Breast epithelium (tissue), 4 donors: ENCODE measurements at regions of chr20 and their contacts with region 1.

Region 1: GRCh38 chr20:10540636-10541493 is 105.8 kb downstream of the SLX4IP start:
- DNase-seq: no peak
- H3K4me3 ChIP-seq: peak overlapping the region in 1 of 3 donors; percentile 27
- H3K27ac ChIP-seq: peak overlapping the region; percentile 83 to 88
- H3K4me1 ChIP-seq: peaks cover 0 to 5% of the 10 kb centered on the region in 2 donors
- H3K27me3 ChIP-seq: no peaks in the 10 kb centered on the region
- CTCF ChIP-seq: no peak
- POLR2A ChIP-seq: no peak

Region 2: DNA sequence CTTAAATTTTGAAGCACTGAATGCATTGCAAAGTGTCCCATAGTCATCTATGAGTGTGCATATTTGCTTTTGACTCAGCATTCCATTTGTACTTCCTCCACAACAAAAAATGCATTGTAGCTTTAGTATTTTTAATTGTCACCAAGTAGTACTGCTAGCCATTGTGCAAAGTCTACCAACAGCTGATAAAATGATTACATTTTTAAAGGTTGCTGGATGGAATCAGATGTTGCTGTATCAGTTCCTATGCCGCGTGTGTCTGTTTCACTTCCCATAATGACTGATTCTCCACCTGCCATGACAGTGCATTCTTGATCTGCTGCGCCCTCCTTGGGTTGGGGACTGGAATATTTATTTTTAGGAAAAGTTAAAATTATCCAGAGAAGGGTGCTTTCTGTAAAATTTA is 64.5 kb before region 1 on chr20:
- intact Hi-C with region 1: loop called (anchors 10 kb)
- DNase-seq: no peak
- H3K4me3 ChIP-seq: no peak overlapping the region
- H3K27ac ChIP-seq: no peak overlapping the region
- H3K4me1 ChIP-seq: no peaks in the 10 kb centered on the region
- H3K27me3 ChIP-seq: no peaks in the 10 kb centered on the region
- CTCF ChIP-seq: no peak
- POLR2A ChIP-seq: no peak

Region 3: GRCh38 chr20:10521068-10521831 is 19.6 kb before region 1 on chr20:
- intact Hi-C with region 1: no loop called
- DNase-seq: no peak
- H3K4me3 ChIP-seq: no peak overlapping the region
- H3K27ac ChIP-seq: no peak overlapping the region
- H3K4me1 ChIP-seq: no peaks in the 10 kb centered on the region
- H3K27me3 ChIP-seq: no peaks in the 10 kb centered on the region
- CTCF ChIP-seq: no peak
- POLR2A ChIP-seq: no peak

Region 4: DNA sequence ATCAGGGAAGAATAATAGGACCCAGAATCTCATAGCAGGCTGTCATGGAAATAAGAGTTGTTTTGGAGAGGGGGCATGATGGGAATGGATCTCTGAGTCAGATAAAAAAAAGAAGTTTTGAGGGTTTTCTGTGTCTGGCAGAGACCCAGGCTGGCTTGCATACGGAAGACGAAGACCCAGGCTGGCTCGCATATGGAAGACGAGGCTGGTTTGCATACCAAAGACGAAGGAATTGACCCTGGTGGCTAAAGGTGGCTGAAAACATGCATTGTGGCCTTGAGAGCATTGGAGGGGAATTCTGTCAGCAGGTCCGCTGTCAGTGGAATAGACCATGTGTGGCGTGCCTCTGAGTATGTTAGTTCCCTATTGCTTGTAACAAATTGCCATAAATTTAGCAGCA is 1711.9 kb after region 1 on chr20:
- intact Hi-C with region 1: loop called (anchors 5 kb)
- DNase-seq: no peak
- H3K4me3 ChIP-seq: no peak overlapping the region
- H3K27ac ChIP-seq: no peak overlapping the region
- H3K4me1 ChIP-seq: no peaks in the 10 kb centered on the region
- H3K27me3 ChIP-seq: no peaks in the 10 kb centered on the region
- CTCF ChIP-seq: no peak
- POLR2A ChIP-seq: no peak